ENCODE measurements at regions of chr10 and their contacts with region 1.

Region 1: DNA sequence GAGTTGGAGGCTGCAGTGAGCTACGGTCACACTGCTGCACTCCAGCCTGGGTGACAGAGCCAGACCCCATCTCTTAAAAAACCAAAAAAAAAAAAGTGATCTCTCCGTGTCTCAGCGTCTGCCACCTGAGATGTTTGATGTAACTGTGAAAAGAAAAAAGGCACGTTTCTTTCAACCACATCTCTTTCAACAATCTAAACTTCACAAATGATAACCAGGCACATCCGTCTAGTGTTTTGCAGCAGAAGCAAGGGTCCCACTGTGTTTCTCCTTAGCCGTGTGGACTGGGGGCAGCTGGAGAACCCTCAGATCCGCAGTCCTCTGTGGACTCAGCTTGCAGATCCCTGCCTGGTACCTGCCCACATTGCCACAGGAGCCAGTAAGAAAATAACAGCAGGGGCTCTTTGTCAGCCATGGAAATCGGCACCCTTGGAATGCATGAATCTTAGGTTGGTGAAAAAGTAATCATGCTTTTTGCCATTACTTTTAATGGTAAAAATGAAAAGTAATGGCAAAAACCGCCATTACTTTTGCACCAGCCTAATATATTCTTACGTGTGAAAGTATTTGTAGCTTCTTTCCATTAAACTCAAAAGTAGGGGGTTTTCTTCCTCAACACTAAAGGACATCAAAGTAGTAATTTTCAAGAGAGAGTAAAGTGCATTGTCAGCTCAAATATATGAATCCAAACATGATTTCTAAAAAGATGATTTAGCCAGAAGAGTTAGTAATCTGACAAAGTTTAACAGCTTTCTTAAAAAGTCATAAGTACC is 276.5 kb downstream of the CCDC3 start:
- DNase-seq: no peak
- H3K4me3 Mint-ChIP-seq: no peak overlapping the region
- H3K27ac Mint-ChIP-seq: peak overlapping the region; percentile 6
- H3K4me1 Mint-ChIP-seq: peaks cover 15% of the 10 kb centered on the region
- H3K27me3 Mint-ChIP-seq: no peaks in the 10 kb centered on the region

Region 2: DNA sequence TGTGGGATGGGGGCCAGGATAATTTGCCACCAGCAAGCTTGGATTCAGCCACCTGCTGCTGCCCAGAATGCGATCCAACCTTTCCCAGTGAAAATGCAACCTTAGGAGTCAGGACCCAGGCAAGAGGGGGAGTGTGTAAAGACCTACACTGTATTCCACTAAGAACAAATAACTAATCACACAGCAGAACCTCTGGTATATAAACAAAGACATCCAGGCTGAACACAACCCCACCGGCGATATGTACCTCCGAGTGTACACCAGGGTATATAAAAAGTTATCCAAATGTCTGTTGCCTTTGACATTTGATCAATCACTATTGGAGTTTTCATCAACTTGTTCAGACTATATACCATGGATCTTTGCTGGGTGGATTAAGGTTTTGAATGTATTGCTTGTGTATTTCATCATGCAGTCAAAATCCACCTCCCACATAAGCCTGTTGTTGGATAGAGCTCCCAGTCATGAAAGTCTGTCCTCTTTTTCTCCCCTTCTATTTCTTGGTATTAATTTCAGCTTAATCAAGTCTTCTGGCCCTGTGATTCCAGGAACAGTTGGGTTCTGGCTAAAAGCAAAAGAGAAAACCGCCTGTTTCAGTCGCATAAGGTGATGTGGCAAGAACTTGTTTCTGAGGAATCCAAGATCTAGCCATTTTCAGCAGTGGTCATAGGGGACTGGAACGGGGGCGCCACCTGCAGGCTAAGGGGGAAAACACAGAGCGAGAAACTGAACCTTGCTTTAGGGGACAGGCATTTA is 14.2 kb before region 1 on chr10:
- CTCF ChIA-PET with region 1: interaction called, 10 read pairs
- POLR2A ChIA-PET with region 1: no interaction called
- DNase-seq: peak; percentile 83
- H3K4me3 Mint-ChIP-seq: no peak overlapping the region
- H3K27ac Mint-ChIP-seq: peak overlapping the region; percentile 51
- H3K4me1 Mint-ChIP-seq: peaks cover 47% of the 10 kb centered on the region
- H3K27me3 Mint-ChIP-seq: no peaks in the 10 kb centered on the region

Region 3: DNA sequence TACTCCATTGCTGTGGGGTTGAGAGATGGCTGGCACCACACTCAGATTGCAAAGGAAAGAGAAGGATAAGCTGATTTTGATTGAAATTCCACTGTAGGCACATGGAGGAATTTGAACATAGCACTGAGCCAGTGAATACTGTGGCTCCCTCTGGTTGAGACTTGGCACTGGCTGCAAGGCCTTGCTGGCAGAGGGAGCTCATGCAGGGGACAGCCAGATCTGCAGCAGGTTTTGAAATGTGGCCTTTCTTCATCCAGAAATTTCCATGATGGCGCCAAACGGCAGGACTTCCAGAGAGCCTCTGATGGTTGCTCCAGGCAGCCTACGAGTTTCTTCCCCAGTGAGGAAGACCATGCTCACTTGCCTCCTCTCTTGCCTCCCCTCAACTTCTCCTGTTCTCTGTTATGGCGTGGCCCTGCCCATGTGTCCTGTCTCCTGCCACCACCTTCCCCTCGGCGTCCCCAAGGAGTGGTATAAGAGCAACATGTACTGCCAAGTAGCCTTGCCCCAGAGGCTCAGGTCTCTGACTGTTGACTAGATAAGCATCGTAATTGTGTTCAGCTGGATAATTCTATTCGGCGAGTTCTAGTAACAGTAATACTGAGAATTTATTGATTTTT is 11.0 kb after region 1 on chr10:
- CTCF ChIA-PET with region 1: no interaction called
- POLR2A ChIA-PET with region 1: no interaction called
- DNase-seq: no peak
- H3K4me3 Mint-ChIP-seq: no peak overlapping the region
- H3K27ac Mint-ChIP-seq: no peak overlapping the region
- H3K4me1 Mint-ChIP-seq: peaks cover 1% of the 10 kb centered on the region
- H3K27me3 Mint-ChIP-seq: no peaks in the 10 kb centered on the region

Region 4: GRCh38 chr10:12757351-12757750 is 32.4 kb after region 1 on chr10:
- CTCF ChIA-PET with region 1: no interaction called
- POLR2A ChIA-PET with region 1: no interaction called
- DNase-seq: no peak
- H3K4me3 Mint-ChIP-seq: no peak overlapping the region
- H3K27ac Mint-ChIP-seq: no peak overlapping the region
- H3K4me1 Mint-ChIP-seq: no peaks in the 10 kb centered on the region
- H3K27me3 Mint-ChIP-seq: no peaks in the 10 kb centered on the region

Measured in activated CD4-positive, alpha-beta T cell treated with anti-CD3 and anti-CD28 coated beads, Interleukin-2, amount 10 ng/mL, durations not matched to agents 7 days and 5 days (primary cell).